CD4-positive, alpha-beta T cell (primary cell): ENCODE measurements at regions of chr20 and their contacts with region 1.

Region 1: DNA sequence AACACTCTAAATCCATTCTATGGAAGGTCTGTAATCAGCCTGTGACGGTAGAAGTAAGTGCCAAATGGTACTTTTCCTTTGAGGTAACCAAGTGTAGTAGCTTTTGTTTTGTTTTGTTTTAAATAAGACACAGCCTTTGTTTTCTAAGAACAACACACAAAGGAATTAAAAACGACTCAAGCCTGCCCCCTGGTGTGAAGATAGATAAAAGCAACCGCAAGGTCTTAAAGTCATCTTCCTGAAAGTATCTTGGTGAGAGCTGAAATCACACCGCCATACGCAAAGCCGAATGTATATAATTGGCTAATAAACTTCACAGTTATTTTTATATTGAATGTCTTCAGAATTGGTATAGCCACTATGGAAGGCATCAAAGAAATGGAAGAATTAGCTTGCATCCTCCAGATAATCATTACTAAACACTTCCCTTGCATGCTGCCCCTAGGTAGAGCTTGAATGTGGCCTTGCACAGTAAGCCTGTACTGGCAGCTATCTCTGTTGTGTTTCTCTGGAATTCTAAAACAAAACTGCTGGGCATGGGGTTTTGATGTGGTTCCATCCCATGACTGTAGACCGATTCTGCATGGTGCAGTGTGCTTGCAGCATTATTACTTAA is 95.6 kb downstream of the LAMP5 start:
- DNase-seq: peak in 6 of 14 experiments; percentile 3 to 60 (median 28)
- ATAC-seq: no peak
- H3K4me3 ChIP-seq: no peak overlapping the region
- H3K4me3 Mint-ChIP-seq: no peak overlapping the region
- H3K27ac ChIP-seq: no peak overlapping the region
- H3K27ac Mint-ChIP-seq: no peak overlapping the region
- H3K4me1 ChIP-seq: no peaks in the 10 kb centered on the region
- H3K4me1 Mint-ChIP-seq: no peaks in the 10 kb centered on the region
- H3K27me3 ChIP-seq: no peaks in the 10 kb centered on the region
- H3K27me3 Mint-ChIP-seq: peaks cover 7% of the 10 kb centered on the region
- CTCF ChIP-seq: peak; percentile 43

Region 2: DNA sequence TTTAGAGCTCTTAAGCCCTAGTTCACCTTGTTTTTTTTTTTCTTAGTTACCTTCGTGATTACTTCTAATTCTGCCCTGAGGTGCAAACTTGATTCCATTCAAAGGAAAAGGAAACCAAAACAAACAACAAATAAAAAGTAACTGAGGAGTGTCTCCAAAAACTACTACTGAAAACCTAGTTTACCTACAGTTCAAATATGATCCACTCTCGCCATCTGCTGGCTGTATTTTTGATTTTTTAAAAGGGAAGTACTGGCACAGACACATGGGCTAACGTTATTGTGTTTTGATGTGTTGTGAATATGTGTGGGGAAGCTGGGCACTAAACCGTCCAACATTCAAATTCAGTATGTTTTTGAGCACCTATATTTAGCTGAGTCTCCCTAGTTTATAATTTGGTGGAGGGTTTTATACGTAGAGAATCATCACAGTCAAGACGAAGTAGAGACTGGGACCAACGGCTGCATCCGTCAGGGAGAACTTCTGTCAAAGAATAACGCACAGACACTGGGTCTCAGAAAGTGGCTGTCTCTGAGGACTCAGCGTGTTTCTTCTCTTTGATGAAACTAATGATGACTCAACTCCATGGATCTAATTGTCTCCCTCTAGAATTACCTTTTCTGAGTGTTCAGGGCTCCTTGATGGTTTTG is 1934.2 kb after region 1 on chr20:
- CTCF ChIA-PET with region 1: no interaction called
- POLR2A ChIA-PET with region 1: no interaction called
- intact Hi-C with region 1: loop called in 1 of 2 experiments (anchors 5 kb)
- DNase-seq: peak in 3 of 14 experiments; percentile 15 to 24 (median 19)
- ATAC-seq: no peak
- H3K4me3 ChIP-seq: no peak overlapping the region
- H3K4me3 Mint-ChIP-seq: no peak overlapping the region
- H3K27ac ChIP-seq: no peak overlapping the region
- H3K27ac Mint-ChIP-seq: no peak overlapping the region
- H3K4me1 ChIP-seq: no peaks in the 10 kb centered on the region
- H3K4me1 Mint-ChIP-seq: no peaks in the 10 kb centered on the region
- H3K27me3 ChIP-seq: no peaks in the 10 kb centered on the region
- H3K27me3 Mint-ChIP-seq: no peaks in the 10 kb centered on the region
- CTCF ChIP-seq: no peak